IMR-90 (cell line): ENCODE measurements at regions of chr16 and their contacts with region 1.

Region 1: GRCh38 chr16:11797166-11797956 is at the start of gene ZC3H7A:
- DNase-seq: peak; percentile 97
- ATAC-seq: peak; percentile 95
- H3K4me3 ChIP-seq: peak within 1 kb of the TSS; percentile 73
- H3K27ac ChIP-seq: peak within 1 kb of the TSS; percentile 95
- H3K4me1 ChIP-seq: peaks cover 27% of the 10 kb centered on the region
- H3K27me3 ChIP-seq: no peaks in the 10 kb centered on the region
- CTCF ChIP-seq: peak; percentile 83
- POLR2A ChIP-seq: peak; percentile 96
- RAD21 ChIP-seq: no peak
- total RNA-seq, gene ZC3H7A: 22.2 and 33.3 TPM in 2 replicates

Region 2: DNA sequence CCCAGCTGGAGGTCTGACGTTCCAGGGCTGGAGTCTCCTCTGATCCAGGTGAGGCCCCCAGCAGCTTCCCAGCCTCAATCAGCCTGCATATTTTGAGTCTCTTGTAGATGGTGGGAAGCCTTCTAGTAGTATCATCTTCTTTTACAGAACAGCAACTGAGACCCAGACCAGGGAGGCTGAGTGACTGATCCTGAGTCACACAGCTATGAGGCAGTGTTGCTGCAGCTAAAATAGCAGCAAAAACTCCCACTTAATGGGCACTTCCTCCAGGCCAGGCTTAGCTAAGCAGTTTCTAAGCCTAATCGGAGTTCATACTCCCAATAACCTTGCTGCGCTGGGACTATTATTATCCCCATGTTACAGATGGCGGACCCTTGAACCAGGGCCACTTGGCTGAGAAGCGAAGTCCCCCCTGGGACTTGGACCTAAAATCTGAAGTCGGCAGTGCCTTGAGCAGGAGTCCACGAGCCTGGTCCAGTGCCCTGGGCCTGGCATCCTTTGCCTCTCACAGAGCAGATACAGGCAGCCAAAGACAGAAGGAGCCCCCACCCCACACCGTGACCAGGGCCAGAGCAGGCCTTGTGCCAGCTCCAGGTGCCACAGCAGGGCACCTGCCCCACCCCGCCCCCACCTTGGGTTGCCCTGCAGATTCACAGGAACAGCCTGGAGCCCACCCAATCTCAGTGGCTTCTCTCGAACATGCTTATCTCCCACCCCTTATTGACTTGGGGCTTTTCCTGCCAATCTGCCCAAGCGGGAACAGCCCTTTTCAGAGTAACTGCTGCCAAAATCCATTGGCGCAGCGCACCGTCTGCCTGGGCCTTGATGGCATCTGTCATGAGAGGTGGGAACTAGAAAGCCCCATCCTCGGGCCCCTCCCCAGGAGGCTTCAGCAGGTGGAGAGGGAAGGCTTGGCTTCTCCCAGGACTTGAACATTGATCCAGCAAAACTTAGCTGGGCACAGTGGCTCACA is 606.5 kb before region 1 on chr16:
- CTCF ChIA-PET with region 1: no interaction called
- POLR2A ChIA-PET with region 1: interaction called, 11 read pairs
- dilution Hi-C with region 1: no loop called
- in situ Hi-C with region 1: no loop called
- intact Hi-C with region 1: no loop called
- DNase-seq: peak; percentile 62
- ATAC-seq: peak; percentile 86
- H3K4me3 ChIP-seq: no peak overlapping the region
- H3K27ac ChIP-seq: no peak overlapping the region
- H3K4me1 ChIP-seq: peaks cover 2% of the 10 kb centered on the region; the same call in 1 of the 2 replicates
- H3K27me3 ChIP-seq: no peaks in the 10 kb centered on the region
- CTCF ChIP-seq: no peak
- POLR2A ChIP-seq: no peak
- RAD21 ChIP-seq: no peak

Region 3: DNA sequence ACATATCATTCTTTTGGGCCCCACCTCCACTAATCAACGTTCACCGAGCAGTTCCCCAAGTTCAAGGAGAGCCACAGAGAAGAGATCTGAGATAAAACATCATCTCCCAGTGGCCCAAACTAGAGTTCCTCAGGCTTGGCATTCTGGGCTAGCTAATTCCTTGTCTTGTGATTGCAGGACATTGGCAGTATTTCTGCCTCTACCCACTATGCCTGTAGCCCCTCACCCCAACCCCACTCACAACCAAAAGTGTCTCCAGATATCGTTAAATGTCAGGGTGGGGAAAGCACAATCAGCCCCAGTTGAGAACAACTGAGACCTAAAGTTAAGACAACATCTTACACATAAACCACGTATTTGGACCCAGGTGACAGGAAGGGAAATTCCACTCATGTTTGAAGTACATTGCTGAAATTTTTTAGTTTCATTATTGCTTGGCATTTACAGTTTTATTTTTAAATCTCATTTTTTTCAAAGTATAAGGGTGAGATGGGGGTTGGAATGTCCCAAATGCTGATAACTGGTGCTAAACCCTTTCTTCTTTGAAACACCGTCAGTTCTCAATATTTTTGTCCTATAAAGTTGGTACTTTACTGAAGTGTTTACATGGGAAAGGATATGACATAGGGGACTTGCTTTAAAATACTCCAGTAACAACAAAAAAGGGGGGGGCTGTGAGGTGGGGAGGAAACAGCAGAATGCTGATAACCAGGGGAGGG is 13.9 kb before region 1 on chr16:
- CTCF ChIA-PET with region 1: interaction called, 12 read pairs
- POLR2A ChIA-PET with region 1: no interaction called
- dilution Hi-C with region 1: no loop called
- in situ Hi-C with region 1: no loop called
- intact Hi-C with region 1: no loop called
- DNase-seq: peak; percentile 45
- ATAC-seq: peak; percentile 43
- H3K4me3 ChIP-seq: peak overlapping the region; percentile 28; the same call in 1 of the 2 replicates
- H3K27ac ChIP-seq: peak overlapping the region; percentile 92
- H3K4me1 ChIP-seq: peaks cover 27% of the 10 kb centered on the region
- H3K27me3 ChIP-seq: no peaks in the 10 kb centered on the region
- CTCF ChIP-seq: no peak
- POLR2A ChIP-seq: no peak
- RAD21 ChIP-seq: no peak

Region 4: GRCh38 chr16:11915644-11916523 is 118.5 kb after region 1 on chr16 and contains the start of gene GSPT1:
- CTCF ChIA-PET with region 1: no interaction called
- POLR2A ChIA-PET with region 1: no interaction called
- dilution Hi-C with region 1: no loop called
- in situ Hi-C with region 1: no loop called
- intact Hi-C with region 1: no loop called
- DNase-seq: peak; percentile 97
- ATAC-seq: peak; percentile 96
- H3K4me3 ChIP-seq: peak within 1 kb of the TSS; percentile 94
- H3K27ac ChIP-seq: peak within 1 kb of the TSS; percentile 87
- H3K4me1 ChIP-seq: peaks cover 8% of the 10 kb centered on the region
- H3K27me3 ChIP-seq: peaks cover 7% of the 10 kb centered on the region
- CTCF ChIP-seq: no peak
- POLR2A ChIP-seq: peak; percentile 85
- RAD21 ChIP-seq: no peak
- total RNA-seq, gene GSPT1: 84.8 and 121 TPM in 2 replicates